ENCODE measurements at regions of chr2 and their contacts with region 1.

Region 1: DNA sequence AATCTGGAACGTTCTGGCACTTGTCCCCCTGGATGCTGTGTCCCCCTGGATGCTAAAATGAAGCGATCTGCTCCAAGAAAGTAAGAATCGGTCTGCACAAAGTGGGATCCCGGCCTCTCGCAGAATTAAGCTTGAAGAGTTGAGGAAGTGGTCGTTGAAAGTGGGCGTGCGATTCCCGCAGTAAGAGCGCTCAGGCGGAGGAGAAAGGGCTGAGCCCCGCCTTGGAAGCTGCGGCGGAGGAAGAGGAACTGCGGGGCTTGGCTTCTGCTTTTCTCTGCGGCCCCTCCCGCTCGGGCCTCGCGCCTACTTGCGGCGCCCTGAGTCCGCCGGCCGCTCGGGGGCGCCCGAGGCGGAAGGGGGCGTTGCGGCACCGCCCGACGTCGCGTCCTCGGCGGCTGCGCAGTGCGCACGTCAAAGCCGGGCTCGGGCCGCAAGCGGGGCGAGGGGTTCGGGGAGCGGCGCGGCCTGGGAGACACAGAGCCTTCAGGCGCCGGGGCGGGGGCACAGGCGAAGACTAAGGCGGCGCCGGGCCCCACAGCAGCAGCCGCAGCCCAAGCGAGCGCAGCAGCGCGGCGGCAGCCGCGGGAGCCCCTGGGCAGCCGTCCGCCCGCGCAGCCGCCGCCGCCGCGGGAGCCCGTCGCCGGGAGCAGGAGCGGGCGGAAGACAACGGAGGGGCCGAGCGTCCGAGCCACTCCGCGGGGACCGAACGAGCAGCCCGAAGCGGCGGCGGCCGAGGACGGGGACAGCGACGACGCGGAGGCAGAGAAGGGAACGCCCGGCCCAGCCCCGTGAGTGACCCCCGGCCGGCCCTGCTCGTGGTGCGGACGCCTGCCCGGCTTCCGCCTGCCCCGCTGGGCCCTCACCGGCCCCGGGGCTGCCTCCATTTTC is at the start of gene CAB39:
- DNase-seq: peak; percentile 83 to 91 (median 89)
- H3K4me3 ChIP-seq: peak within 1 kb of the TSS; percentile 86 to 94
- H3K4me3 Mint-ChIP-seq: peak within 1 kb of the TSS; percentile 95 to 99 (median 96)
- H3K27ac ChIP-seq: peak within 1 kb of the TSS; percentile 80
- H3K27ac Mint-ChIP-seq: peak within 1 kb of the TSS; percentile 92 to 99 (median 96)
- H3K4me1 ChIP-seq: peaks cover 37% of the 10 kb centered on the region
- H3K4me1 Mint-ChIP-seq: peaks cover 23 to 49% (median 38%) of the 10 kb centered on the region in 4 donors
- H3K27me3 ChIP-seq: no peaks in the 10 kb centered on the region
- H3K27me3 Mint-ChIP-seq: no peaks in the 10 kb centered on the region
- total RNA-seq, gene CAB39: 112 to 115 TPM

Region 2: DNA sequence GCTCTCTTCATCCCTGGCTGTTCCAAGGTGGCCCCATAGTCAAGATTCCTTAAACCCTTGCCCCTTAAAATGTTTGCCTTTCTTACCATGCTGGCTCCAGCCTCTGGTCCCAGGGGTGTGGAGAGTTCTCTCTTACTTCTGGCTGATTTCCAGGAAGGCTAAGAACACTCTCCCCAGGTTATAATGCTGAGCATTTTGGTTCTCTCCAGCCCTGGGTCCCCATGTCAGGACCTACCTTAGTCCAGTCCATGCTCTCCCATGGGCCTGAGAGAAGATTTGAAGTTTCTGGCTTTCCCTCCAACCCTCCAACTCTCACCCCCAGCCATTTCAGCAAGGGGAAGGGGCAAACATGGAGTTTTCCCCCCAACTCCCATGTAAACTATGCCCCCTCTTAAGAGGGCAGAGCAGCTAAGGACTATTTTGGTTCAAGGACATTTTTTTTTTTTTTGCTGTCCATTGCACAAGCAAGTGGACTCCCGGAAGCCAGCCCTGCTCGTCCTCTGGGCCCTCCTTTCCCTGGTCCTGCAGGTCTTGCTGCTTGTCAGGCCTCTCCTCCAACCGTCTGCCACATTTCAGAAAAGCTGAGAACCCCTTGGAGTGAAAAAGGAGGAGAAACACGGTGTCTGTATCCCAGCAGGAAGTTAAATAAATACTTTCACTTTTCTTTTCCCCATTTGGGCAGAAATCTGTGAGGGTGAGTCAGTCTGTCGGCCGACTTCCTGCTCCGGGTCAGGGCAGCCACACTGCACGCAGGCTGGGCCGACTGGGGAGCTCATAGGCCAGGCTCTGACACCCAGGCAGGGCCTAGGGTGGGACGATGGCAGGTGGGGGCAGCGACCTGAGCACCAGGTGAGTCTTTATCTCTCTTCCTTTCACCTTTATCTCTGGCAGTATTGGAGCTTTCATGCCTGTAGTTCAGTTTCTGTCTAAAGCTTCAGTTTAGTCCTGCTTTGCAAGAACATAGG is 386.0 kb before region 1 on chr2 and contains the start of gene SP140L:
- CTCF ChIA-PET with region 1: no interaction called
- POLR2A ChIA-PET with region 1: interaction called, 3 read pairs
- intact Hi-C with region 1: loop called (anchors 2 kb)
- DNase-seq: peak; percentile 73 to 89 (median 79)
- H3K4me3 ChIP-seq: peak within 1 kb of the TSS; percentile 51 to 82
- H3K4me3 Mint-ChIP-seq: peak within 1 kb of the TSS; percentile 90 to 98 (median 94)
- H3K27ac ChIP-seq: peak within 1 kb of the TSS; percentile 84
- H3K27ac Mint-ChIP-seq: peak within 1 kb of the TSS; percentile 94 to 99 (median 97)
- H3K4me1 ChIP-seq: peaks cover 78% of the 10 kb centered on the region
- H3K4me1 Mint-ChIP-seq: peaks cover 48 to 90% (median 75%) of the 10 kb centered on the region in 4 donors
- H3K27me3 ChIP-seq: no peaks in the 10 kb centered on the region
- H3K27me3 Mint-ChIP-seq: no peaks in the 10 kb centered on the region
- total RNA-seq, gene SP140L: 98.6 to 102 TPM

Region 3: GRCh38 chr2:230643576-230644291 is 69.0 kb before region 1 on chr2:
- CTCF ChIA-PET with region 1: interaction called, 3 read pairs
- POLR2A ChIA-PET with region 1: interaction called, 18 read pairs
- intact Hi-C with region 1: loop called (anchors 1 kb)
- DNase-seq: peak; percentile 44 to 65 (median 53)
- H3K4me3 ChIP-seq: peak overlapping the region; percentile 8 to 30
- H3K4me3 Mint-ChIP-seq: peak overlapping the region; percentile 34 to 84 (median 71)
- H3K27ac ChIP-seq: peak overlapping the region; percentile 51
- H3K27ac Mint-ChIP-seq: peak overlapping the region; percentile 85 to 97 (median 95)
- H3K4me1 ChIP-seq: peaks cover 33% of the 10 kb centered on the region
- H3K4me1 Mint-ChIP-seq: peaks cover 11 to 35% (median 25%) of the 10 kb centered on the region in 4 donors
- H3K27me3 ChIP-seq: no peaks in the 10 kb centered on the region
- H3K27me3 Mint-ChIP-seq: no peaks in the 10 kb centered on the region

Region 4: DNA sequence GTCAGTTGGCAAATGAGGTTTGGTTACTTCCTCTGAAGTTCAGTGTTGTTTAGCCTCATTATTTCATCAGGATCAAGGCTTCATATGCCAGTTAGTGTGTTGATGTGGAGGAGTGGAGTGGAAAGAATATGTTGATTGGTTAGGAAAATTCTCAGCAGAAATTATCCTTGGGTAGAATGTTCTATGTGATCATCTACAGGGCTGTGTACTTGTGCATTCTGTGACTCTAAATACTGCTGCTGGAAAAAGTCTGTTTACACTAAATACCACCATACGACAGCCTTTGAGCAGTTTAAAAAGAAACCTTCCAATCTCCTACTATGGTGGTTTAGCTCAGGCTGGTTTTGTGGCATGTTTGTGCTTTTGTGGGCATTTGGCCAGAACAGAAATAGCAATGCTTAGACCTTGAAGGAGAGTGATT is 25.7 kb after region 1 on chr2:
- CTCF ChIA-PET with region 1: interaction called, 6 read pairs
- POLR2A ChIA-PET with region 1: interaction called, 10 read pairs
- intact Hi-C with region 1: no loop called
- DNase-seq: no peak
- H3K4me3 ChIP-seq: no peak overlapping the region
- H3K4me3 Mint-ChIP-seq: peak overlapping the region in 6 of 8 donors; percentile 15 to 59 (median 48)
- H3K27ac ChIP-seq: peak overlapping the region; percentile 1
- H3K27ac Mint-ChIP-seq: peak overlapping the region; percentile 8 to 59 (median 54)
- H3K4me1 ChIP-seq: peaks cover 81% of the 10 kb centered on the region
- H3K4me1 Mint-ChIP-seq: peaks cover 59 to 85% (median 71%) of the 10 kb centered on the region in 4 donors
- H3K27me3 ChIP-seq: no peaks in the 10 kb centered on the region
- H3K27me3 Mint-ChIP-seq: no peaks in the 10 kb centered on the region

Region 5: GRCh38 chr2:230774348-230774951 is 61.8 kb after region 1 on chr2:
- CTCF ChIA-PET with region 1: interaction called, 8 read pairs
- POLR2A ChIA-PET with region 1: interaction called, 16 read pairs
- intact Hi-C with region 1: no loop called
- DNase-seq: no peak
- H3K4me3 ChIP-seq: no peak overlapping the region
- H3K4me3 Mint-ChIP-seq: no peak overlapping the region
- H3K27ac ChIP-seq: no peak overlapping the region
- H3K27ac Mint-ChIP-seq: peak overlapping the region in 4 of 7 donors; percentile 1 to 68 (median 16)
- H3K4me1 ChIP-seq: peaks cover 93% of the 10 kb centered on the region
- H3K4me1 Mint-ChIP-seq: peaks cover 72 to 90% (median 82%) of the 10 kb centered on the region in 4 donors
- H3K27me3 ChIP-seq: no peaks in the 10 kb centered on the region
- H3K27me3 Mint-ChIP-seq: no peaks in the 10 kb centered on the region

Region 6: GRCh38 chr2:230793572-230794359 is 81.1 kb after region 1 on chr2:
- CTCF ChIA-PET with region 1: interaction called, 70 read pairs
- POLR2A ChIA-PET with region 1: interaction called, 70 read pairs
- intact Hi-C with region 1: loop called (anchors 1 kb)
- DNase-seq: peak; percentile 65 to 92 (median 71)
- H3K4me3 ChIP-seq: no peak overlapping the region
- H3K4me3 Mint-ChIP-seq: peak overlapping the region; percentile 63 to 82 (median 75)
- H3K27ac ChIP-seq: peak overlapping the region; percentile 61
- H3K27ac Mint-ChIP-seq: peak overlapping the region in 6 of 7 donors; percentile 88 to 96 (median 92)
- H3K4me1 ChIP-seq: peaks cover 72% of the 10 kb centered on the region
- H3K4me1 Mint-ChIP-seq: peaks cover 41 to 63% (median 46%) of the 10 kb centered on the region in 4 donors
- H3K27me3 ChIP-seq: no peaks in the 10 kb centered on the region
- H3K27me3 Mint-ChIP-seq: no peaks in the 10 kb centered on the region

Region 7: DNA sequence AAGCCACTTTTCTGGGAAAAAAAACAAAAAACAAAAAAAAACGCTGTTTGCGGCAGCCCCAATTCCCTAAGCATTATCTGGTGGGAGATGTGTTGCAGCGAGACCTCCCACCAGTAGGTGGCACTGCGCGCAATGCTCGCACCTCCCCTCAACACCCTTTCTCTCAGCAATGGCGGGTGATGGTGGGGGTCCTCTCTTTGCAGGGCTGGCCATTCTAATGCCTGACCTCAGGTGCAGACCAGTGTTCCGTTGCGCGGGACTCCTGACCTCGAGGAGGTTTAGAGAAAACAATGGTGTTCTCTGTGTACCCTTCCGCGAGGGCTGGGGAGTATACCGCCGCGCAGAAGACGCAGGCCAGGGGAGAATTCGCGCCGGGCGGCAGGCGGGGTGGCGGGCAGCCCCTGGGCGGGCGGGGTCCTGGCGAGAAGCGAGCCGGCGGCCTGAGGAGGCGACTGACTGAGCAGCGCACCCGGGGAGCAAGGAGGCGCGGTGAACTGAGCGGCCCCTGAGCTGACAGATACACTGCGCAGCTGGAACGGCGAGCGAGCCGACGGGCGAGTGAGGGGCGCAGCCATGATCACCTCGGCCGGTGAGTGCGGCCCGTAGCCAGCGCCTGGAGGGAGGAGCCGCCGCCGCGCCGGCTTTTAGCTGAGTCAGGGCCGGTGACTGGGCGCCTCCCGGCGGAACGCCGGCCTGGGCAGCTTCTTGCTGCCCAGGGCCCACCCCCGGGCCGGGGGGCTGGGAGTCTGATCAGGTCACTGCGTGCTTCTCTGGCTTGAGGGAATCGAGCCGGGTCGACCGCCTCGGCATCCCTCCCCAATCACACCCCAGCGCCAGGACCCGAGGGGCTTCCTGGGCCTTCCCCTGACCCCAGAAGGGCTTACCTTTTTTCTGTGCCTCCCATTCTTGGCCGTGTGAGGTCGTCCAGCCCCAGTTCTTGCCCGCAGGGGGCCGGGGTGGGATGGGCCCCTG is 344.1 kb after region 1 on chr2 and contains the start of gene PSMD1:
- CTCF ChIA-PET with region 1: no interaction called
- POLR2A ChIA-PET with region 1: interaction called, 3 read pairs
- intact Hi-C with region 1: loop called (anchors 2 kb)
- DNase-seq: peak; percentile 95 to 98 (median 96)
- H3K4me3 ChIP-seq: peak within 1 kb of the TSS; percentile 70 to 87
- H3K4me3 Mint-ChIP-seq: peak within 1 kb of the TSS; percentile 98 to 100 (median 99)
- H3K27ac ChIP-seq: peak within 1 kb of the TSS; percentile 85
- H3K27ac Mint-ChIP-seq: peak within 1 kb of the TSS; percentile 99 to 100 (median 100)
- H3K4me1 ChIP-seq: peaks cover 35% of the 10 kb centered on the region
- H3K4me1 Mint-ChIP-seq: peaks cover 31 to 66% (median 49%) of the 10 kb centered on the region in 4 donors
- H3K27me3 ChIP-seq: no peaks in the 10 kb centered on the region
- H3K27me3 Mint-ChIP-seq: peaks cover 0 to 5% of the 10 kb centered on the region in 2 donors
- total RNA-seq, gene PSMD1: 38.0 to 40.8 TPM